H1 (cell line): ENCODE measurements at regions of chr5 and their contacts with region 1.

Region 1: GRCh38 chr5:179623003-179623880 is at the start of gene HNRNPH1:
- DNase-seq: peak; percentile 97 to 98
- H3K4me3 ChIP-seq: peak within 1 kb of the TSS; percentile 80 to 99 (median 99)
- H3K27ac ChIP-seq: peak within 1 kb of the TSS; percentile 99
- H3K4me1 ChIP-seq: peaks cover 5 to 24% (median 14%) of the 10 kb centered on the region in 4 experiments
- H3K27me3 ChIP-seq: no peaks in the 10 kb centered on the region
- CTCF ChIP-seq: no peak
- EP300 ChIP-seq: no peak
- POLR2A ChIP-seq: peak; percentile 99 to 100
- RAD21 ChIP-seq: no peak
- total RNA-seq, gene HNRNPH1: 720 and 735 TPM in 2 replicates

Region 2: GRCh38 chr5:179355976-179356974 is 267.0 kb before region 1 on chr5:
- CTCF ChIA-PET with region 1: no interaction called
- POLR2A ChIA-PET with region 1: no interaction called
- DNase-seq: no peak
- H3K4me3 ChIP-seq: no peak overlapping the region
- H3K27ac ChIP-seq: no peak overlapping the region
- H3K4me1 ChIP-seq: no peaks in the 10 kb centered on the region
- H3K27me3 ChIP-seq: no peaks in the 10 kb centered on the region; a peak in 1 of 7 replicates
- CTCF ChIP-seq: no peak
- EP300 ChIP-seq: no peak
- POLR2A ChIP-seq: no peak
- RAD21 ChIP-seq: no peak

Region 3: GRCh38 chr5:179550511-179551230 is 72.6 kb before region 1 on chr5 and contains the start of gene RUFY1:
- CTCF ChIA-PET with region 1: no interaction called
- POLR2A ChIA-PET with region 1: interaction called, 16 read pairs
- DNase-seq: peak in 1 of 2 experiments; percentile 89
- H3K4me3 ChIP-seq: peak within 1 kb of the TSS; percentile 76 to 97 (median 88)
- H3K27ac ChIP-seq: peak within 1 kb of the TSS; percentile 96
- H3K4me1 ChIP-seq: peaks cover 2 to 6% (median 5%) of the 10 kb centered on the region in 4 experiments
- H3K27me3 ChIP-seq: no peaks in the 10 kb centered on the region
- CTCF ChIP-seq: no peak
- EP300 ChIP-seq: no peak
- POLR2A ChIP-seq: peak; percentile 76 to 89
- RAD21 ChIP-seq: no peak
- total RNA-seq, gene RUFY1: 29.5 and 31.2 TPM in 2 replicates

Region 4: DNA sequence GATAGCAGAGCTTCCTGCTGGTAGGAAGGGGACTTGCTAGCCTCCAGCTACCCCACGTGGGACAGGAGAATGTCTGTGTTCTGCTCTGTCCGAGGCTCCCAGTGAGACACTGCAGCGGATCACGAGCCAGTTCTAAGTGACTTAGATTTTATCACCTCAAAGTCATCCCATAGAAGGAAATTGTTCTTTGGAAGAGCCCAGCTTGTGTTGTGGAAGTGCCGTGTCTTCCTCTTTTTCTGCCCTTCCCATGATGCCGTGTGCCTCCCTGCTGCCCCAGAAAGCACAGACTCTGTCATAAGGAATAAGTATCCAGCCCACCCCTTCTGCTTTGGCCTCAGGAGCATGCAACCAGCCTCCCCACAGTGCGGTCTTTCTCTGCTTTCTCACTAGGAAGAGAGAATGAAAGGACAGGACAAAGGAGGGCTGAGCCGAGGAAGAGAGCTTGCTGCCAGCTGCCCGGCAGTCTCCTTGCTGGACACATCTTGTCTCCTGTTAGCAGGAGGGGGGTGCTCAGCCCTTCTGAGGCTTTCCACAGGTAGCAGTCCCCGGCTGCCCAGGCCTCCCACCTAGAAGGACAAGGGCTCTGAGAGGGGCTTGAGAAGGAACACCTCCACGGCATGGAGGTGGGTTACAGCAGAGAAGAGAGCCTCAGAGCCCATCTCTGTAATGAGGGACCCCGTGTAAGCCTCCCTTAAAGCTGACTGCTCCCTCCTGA is 37.1 kb before region 1 on chr5:
- CTCF ChIA-PET with region 1: interaction called, 4 read pairs
- POLR2A ChIA-PET with region 1: interaction called, 12 read pairs
- DNase-seq: no peak
- H3K4me3 ChIP-seq: no peak overlapping the region
- H3K27ac ChIP-seq: no peak overlapping the region
- H3K4me1 ChIP-seq: no peaks in the 10 kb centered on the region
- H3K27me3 ChIP-seq: no peaks in the 10 kb centered on the region
- CTCF ChIP-seq: no peak
- EP300 ChIP-seq: no peak
- POLR2A ChIP-seq: no peak
- RAD21 ChIP-seq: no peak

Region 5: DNA sequence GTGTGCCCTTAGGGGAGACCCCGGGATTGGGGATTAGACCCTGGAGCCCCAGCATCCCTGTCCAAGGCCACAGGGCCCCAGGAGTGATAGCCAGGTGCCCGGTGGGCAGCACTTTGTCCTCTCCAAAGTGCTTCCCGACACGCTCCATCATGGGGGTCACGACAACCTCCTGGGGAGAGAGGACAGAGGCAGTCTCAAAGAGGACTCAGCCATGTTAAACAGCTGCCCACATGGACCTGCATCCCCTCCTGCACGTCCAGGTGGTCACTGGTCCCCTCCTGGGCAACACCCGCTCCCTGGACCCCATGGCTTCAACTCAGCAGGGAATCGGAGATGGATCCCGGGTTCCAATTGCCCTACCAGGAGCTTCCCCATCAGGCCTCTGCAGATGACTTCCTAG is 20.3 kb after region 1 on chr5:
- CTCF ChIA-PET with region 1: interaction called, 4 read pairs
- POLR2A ChIA-PET with region 1: interaction called, 46 read pairs
- DNase-seq: no peak
- H3K4me3 ChIP-seq: no peak overlapping the region
- H3K27ac ChIP-seq: no peak overlapping the region
- H3K4me1 ChIP-seq: peaks cover 0 to 2% (median 0%) of the 10 kb centered on the region in 4 experiments; a peak in 1 of 7 replicates
- H3K27me3 ChIP-seq: no peaks in the 10 kb centered on the region
- CTCF ChIP-seq: no peak
- EP300 ChIP-seq: no peak
- POLR2A ChIP-seq: no peak
- RAD21 ChIP-seq: no peak

Region 6: DNA sequence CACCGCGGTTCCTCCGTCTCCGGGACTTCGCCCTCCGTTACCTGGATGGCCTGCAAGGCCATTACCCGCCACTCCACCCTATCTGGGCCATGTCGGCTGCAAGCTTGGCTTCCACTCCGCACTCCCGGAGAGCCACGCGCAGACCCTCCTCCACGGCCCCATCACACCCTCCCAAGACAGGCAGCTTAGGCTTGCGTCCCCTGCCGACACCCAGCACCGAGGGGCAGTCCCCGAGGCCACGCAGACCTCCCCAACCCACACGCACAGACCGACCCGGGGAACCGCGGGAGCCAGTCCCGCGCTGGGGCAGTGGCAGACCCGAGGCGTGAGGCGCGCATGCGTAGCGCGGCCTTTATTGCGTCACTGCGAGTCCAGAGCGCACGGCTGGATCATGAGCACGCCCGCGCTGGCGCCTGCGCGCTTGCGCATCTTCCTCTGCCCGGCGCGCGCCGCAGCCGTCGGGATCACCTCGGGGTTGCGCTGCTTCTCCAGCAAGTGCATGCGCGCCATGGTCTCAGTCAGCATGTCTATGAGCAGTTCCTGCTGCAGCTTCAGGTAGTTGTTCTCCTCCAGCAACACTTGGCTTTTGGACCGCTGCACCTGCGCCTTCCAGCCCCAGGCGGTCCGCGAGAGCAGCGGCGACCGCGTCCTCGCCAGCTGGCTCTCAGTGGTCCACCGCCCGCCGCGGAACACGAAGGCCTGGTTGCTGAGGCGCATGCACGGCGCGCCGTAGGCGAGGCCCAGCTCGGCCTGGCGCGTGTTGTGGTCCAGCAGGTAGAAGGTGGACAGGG is 55.2 kb after region 1 on chr5:
- CTCF ChIA-PET with region 1: interaction called, 3 read pairs
- POLR2A ChIA-PET with region 1: interaction called, 49 read pairs
- DNase-seq: peak; percentile 88 to 94
- H3K4me3 ChIP-seq: peak overlapping the region; percentile 78 to 89 (median 82)
- H3K27ac ChIP-seq: peak overlapping the region; percentile 76
- H3K4me1 ChIP-seq: peaks cover 0 to 12% (median 7%) of the 10 kb centered on the region in 4 experiments; a peak in 5 of 7 replicates
- H3K27me3 ChIP-seq: peaks cover 0 to 4% (median 0%) of the 10 kb centered on the region in 4 experiments; a peak in 1 of 7 replicates
- CTCF ChIP-seq: peak in 1 of 3 experiments; percentile 0; a peak in 1 of 4 replicates
- EP300 ChIP-seq: no peak
- POLR2A ChIP-seq: peak; percentile 80 to 81
- RAD21 ChIP-seq: no peak

Region 7: DNA sequence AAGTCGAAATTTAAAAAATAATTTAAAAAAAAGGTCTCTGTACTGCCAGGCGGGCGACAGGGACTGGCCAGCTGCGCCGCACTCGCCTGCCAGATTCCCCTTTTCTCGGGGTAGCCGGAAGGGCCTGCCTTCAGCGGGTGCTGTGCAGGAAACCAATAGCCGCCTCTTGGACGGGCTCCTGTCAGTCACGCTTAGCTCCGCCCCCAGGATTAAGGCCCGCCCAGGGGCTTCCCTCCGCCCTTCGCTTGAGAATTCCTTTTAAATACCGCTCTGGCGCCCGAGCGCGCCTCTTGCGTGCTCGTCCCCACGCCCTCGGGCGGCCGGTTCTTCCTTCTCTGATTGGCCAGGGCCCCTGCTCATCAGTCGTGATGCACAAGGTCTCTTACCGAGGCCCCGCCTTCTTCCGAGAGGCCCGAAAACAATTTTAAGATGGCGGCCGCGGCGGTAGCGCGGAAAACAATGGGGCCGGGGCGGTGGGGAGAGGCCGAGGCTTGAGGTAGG is 109.2 kb after region 1 on chr5 and contains the start of gene MAML1:
- CTCF ChIA-PET with region 1: no interaction called
- POLR2A ChIA-PET with region 1: interaction called, 25 read pairs
- DNase-seq: peak; percentile 99 to 100
- H3K4me3 ChIP-seq: peak within 1 kb of the TSS; percentile 64 to 80 (median 76)
- H3K27ac ChIP-seq: peak within 1 kb of the TSS; percentile 85
- H3K4me1 ChIP-seq: peaks cover 0 to 3% (median 3%) of the 10 kb centered on the region in 4 experiments; a peak in 3 of 7 replicates
- H3K27me3 ChIP-seq: no peaks in the 10 kb centered on the region
- CTCF ChIP-seq: 0 out of 4 replicates have a peak, but pooled peaks of 1 of the 3 experiments have one; percentile 1
- EP300 ChIP-seq: no peak
- POLR2A ChIP-seq: peak; percentile 52 to 85
- RAD21 ChIP-seq: no peak
- total RNA-seq, gene MAML1: 41.9 and 45.6 TPM in 2 replicates